ENCODE measurements at regions of chr1 and their contacts with region 1.

Region 1: DNA sequence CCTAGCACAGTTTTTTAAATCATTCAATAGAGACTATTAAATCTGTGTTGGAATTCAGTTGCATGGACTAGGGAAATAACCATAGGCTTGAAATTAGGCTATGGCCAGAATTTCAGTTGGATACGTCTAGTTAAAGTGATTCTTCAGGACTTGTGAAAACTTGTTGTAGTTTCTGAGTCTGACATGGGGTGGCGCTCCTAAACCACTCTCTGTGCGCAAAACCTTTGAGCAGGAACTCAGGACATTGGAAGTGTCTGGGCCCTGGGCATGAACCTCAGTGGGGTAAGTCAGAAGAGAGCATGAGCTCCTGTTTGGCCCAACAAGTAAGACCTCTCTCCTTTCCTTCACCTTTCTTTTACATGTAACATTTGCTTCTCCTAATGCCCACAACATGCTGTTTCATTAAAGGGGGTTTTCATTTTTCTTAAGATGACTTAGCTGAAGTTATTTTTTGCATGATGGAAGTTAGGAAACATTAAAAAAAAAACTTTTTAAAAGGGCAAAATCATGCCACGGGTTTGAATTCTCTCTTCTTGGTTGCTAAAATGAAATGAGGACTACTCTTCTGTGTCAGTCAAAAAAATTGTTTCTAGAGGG is 17.1 kb upstream of the CCDC190 start:
- DNase-seq: no peak
- H3K4me3 ChIP-seq: no peak overlapping the region
- H3K27ac ChIP-seq: no peak overlapping the region
- H3K4me1 ChIP-seq: no peaks in the 10 kb centered on the region
- H3K27me3 ChIP-seq: peaks cover 0 to 8% (median 0%) of the 10 kb centered on the region in 4 donors
- CTCF ChIP-seq: peak in 5 of 6 experiments; percentile 59 to 84 (median 72)
- POLR2A ChIP-seq: no peak

Region 2: DNA sequence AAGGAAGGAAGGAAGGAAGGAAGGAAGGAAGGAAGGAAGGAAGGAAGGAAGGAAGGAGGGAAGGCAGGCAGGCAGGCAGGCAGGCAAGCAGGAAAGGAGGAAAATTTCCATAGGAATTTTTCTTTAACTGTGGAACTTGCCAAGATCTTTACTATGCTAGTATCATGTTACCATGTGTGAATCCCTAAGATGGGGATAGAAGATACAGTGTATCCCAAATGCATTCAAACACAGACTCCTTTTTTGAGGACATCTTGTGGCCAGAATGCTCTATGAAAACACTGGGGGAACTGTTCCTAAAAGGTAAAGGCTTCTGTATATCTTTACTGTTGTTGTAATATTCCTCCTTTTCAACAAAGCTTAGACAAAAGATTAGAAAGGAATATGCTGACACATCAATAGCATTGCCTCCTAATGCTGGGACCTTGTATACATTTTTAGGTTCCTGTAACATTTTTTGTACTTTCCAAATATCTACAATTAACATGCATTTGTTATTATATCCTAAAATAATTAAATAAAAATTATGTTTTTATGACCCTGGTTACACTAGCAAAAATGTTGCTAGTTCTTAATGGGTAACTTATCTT is 37.8 kb before region 1 on chr1:
- intact Hi-C with region 1: no loop called
- DNase-seq: no peak
- H3K4me3 ChIP-seq: no peak overlapping the region
- H3K27ac ChIP-seq: no peak overlapping the region
- H3K4me1 ChIP-seq: no peaks in the 10 kb centered on the region
- H3K27me3 ChIP-seq: no peaks in the 10 kb centered on the region
- CTCF ChIP-seq: no peak
- POLR2A ChIP-seq: no peak

Region 3: DNA sequence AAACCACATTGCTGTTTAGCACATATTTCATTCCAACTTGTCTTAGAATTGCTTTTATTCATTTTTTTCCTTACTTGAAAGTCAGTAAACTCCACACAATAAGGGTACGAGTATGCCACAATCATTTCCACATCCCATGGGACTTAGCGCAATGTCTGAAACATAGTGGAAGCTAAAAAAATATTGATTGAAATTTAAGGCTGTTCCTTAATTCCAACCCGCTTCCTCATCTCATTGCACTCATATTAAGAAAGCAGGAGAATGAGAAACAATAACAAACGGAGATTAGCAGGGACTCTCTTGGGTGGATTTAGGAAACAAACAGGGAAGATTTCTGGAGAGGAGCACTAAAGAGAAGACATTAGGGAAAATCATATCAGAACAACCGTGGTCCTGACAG is 151.8 kb after region 1 on chr1:
- intact Hi-C with region 1: no loop called
- DNase-seq: no peak
- H3K4me3 ChIP-seq: no peak overlapping the region
- H3K27ac ChIP-seq: no peak overlapping the region
- H3K4me1 ChIP-seq: no peaks in the 10 kb centered on the region
- H3K27me3 ChIP-seq: no peaks in the 10 kb centered on the region
- CTCF ChIP-seq: no peak
- POLR2A ChIP-seq: no peak

Region 4: DNA sequence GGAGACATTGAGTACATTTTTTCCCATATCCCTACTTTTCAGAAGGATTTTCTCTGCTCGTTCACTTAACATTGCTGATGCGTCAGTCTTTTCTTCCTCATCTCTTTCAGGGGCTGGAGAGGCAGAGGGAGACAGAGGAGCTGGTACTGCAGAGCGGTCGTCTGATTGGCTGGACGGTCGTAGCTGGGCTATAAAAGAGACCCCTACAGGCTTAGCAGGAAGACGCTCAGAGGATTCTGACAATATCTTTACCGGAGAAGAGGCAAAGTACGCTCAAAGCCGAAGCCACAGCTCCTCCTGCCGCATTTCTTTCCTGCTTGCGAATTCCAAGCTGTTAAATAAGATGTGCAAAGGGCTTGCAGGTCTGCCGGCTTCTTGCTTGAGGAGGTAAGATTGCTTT is 191.0 kb after region 1 on chr1 and contains the start of gene RGS4:
- intact Hi-C with region 1: loop called (anchors 10 kb)
- DNase-seq: no peak
- H3K4me3 ChIP-seq: peak within 1 kb of the TSS; percentile 0 to 49 (median 34)
- H3K27ac ChIP-seq: peak within 1 kb of the TSS in 2 of 4 donors; percentile 11 to 40
- H3K4me1 ChIP-seq: peaks cover 0 to 23% (median 0%) of the 10 kb centered on the region in 3 donors
- H3K27me3 ChIP-seq: peaks cover 0 to 18% (median 0%) of the 10 kb centered on the region in 4 donors
- CTCF ChIP-seq: peak in 4 of 6 experiments; percentile 10 to 41 (median 34)
- POLR2A ChIP-seq: no peak
- total RNA-seq, gene RGS4: 0.26 to 1.5 (median 0.70) TPM in 3 of 4 donors, not detected in the other

Region 5: DNA sequence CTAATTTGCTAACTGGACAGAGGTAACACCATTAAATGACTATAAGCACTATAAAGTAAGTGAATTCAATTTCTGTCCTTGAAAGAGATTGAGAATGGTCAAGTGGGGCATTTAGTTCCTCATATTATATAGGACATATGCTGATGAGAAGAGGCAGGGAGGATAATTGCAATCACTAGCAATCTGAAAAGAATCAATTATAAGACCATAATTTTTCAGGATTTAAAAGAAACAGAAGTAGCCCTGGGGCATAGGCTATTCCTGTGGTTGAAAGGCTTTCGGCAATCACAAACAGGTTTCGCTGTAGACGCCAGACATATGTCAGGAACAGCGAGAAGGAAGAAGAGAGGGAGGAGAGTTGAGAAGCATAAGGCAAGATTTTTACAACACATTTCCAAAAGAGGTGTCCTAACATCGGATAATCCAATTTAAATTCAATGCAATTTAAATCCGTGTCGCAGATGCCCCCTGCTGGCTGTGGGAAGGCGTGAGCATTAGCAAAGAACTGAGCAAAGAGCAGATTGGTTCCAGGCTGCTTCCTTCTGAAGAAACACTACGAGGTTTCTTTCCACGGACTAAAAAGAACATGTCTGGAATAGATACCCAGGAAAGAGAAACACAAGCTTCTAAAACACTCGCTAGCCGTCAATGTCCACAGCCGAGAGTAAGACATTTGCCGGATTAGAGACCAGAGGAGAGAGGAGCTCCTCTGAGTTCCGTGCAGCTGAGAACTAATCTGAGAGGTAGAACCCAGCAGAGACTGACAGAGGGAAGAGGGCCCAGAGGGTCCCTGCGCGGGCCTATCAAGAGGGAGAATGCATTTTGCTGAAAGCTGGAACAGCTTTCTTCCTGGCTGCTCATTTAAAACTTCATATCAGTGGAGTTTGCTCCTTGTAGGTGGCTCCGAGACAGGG is 296.7 kb after region 1 on chr1:
- intact Hi-C with region 1: loop called (anchors 5 kb)
- DNase-seq: no peak
- H3K4me3 ChIP-seq: peak overlapping the region in 1 of 4 donors; percentile 37
- H3K27ac ChIP-seq: peak overlapping the region in 3 of 4 donors; percentile 15 to 44 (median 19)
- H3K4me1 ChIP-seq: peaks cover 0 to 39% (median 4%) of the 10 kb centered on the region in 3 donors
- H3K27me3 ChIP-seq: no peaks in the 10 kb centered on the region
- CTCF ChIP-seq: peak; percentile 52 to 87 (median 76)
- POLR2A ChIP-seq: no peak